Ovary (tissue), 10 donors: ENCODE measurements at regions of chr3 and their contacts with region 1.

Region 1: DNA sequence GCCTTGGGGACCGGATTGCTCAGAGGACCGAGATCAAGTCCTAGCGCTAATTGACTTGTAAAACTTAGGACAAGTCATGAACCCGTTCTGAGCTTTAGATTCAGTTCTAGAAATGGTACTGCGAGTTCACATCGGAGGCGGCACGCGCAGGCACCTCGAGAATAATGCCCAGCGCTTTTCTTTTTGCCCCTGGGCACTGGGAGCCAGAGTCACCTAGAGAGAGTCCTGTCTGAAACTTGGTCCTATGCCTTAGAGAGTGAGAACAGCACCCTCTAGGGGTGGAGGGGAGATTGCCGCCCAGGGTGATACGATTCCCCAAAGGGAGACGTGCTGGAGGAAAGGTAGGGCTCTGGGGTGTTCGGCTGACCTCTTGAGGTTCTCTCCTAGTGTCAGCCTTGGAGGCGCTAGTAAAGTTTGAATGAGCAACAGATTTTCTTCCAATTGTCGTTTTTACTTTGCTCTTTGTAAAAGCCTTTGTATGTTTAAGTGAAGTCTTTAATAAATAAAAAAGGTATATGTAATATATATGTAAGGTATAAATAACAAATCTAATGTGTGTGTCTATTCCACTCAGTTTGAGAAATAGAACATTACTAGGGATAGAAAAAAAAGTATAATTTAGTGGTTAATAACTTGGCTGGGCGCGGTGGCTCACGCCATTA is 826 bp downstream of the EEF1AKMT4 start:
- DNase-seq: peak; percentile 64 to 86 (median 79)
- H3K4me3 ChIP-seq: peak overlapping the region; percentile 97
- H3K27ac ChIP-seq: no peak overlapping the region
- H3K4me1 ChIP-seq: peaks cover 2% of the 10 kb centered on the region
- H3K27me3 ChIP-seq: no peaks in the 10 kb centered on the region
- CTCF ChIP-seq: peak; percentile 53 to 64 (median 57)
- EP300 ChIP-seq: no peak
- POLR2A ChIP-seq: no peak

Region 2: GRCh38 chr3:183895296-183895695 is 355.0 kb before region 1 on chr3:
- intact Hi-C with region 1: loop called in 3 of 4 experiments (anchors 5 to 10 kb)
- DNase-seq: peak in 1 of 5 donors; percentile 32
- H3K4me3 ChIP-seq: no peak overlapping the region
- H3K27ac ChIP-seq: no peak overlapping the region
- H3K4me1 ChIP-seq: no peaks in the 10 kb centered on the region
- H3K27me3 ChIP-seq: no peaks in the 10 kb centered on the region
- CTCF ChIP-seq: peak in 2 of 3 donors; percentile 33 to 35
- EP300 ChIP-seq: no peak
- POLR2A ChIP-seq: no peak

Region 3: GRCh38 chr3:184135149-184135910 is 115.0 kb before region 1 on chr3 and contains the start of gene EIF2B5:
- intact Hi-C with region 1: loop called in 2 of 4 experiments (anchors 10 kb)
- DNase-seq: peak; percentile 86 to 91 (median 87)
- H3K4me3 ChIP-seq: peak within 1 kb of the TSS; percentile 60
- H3K27ac ChIP-seq: peak within 1 kb of the TSS; percentile 80 to 88
- H3K4me1 ChIP-seq: no peaks in the 10 kb centered on the region
- H3K27me3 ChIP-seq: no peaks in the 10 kb centered on the region
- CTCF ChIP-seq: peak in 1 of 3 donors; percentile 33
- EP300 ChIP-seq: no peak
- POLR2A ChIP-seq: peak; percentile 52
- total RNA-seq, gene EIF2B5: 18.6 to 31.9 (median 28.7) TPM

Region 4: DNA sequence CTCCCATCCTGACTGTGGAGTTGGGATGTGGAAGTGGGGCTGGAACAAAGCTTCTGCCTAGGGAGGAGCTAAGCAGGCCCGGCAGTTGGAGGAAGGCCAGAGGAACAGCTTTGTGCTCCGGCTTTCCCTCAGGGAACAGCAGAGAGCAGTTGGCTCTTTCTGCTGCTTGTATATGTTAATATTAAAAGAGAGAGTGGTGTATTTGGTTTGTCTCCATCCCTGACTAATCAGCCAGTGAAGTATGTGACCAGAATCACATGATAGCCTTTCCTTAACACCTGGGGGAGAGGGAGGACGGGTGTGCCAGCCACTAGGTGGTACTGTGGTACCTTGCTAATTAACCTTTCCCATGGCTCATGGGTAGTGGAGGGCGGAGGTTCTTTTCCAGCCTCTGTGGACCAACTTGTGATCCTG is 105.2 kb before region 1 on chr3:
- intact Hi-C with region 1: loop called in 1 of 4 experiments (anchors 10 kb)
- DNase-seq: peak in 1 of 5 donors; percentile 38
- H3K4me3 ChIP-seq: no peak overlapping the region
- H3K27ac ChIP-seq: no peak overlapping the region
- H3K4me1 ChIP-seq: no peaks in the 10 kb centered on the region
- H3K27me3 ChIP-seq: no peaks in the 10 kb centered on the region
- CTCF ChIP-seq: no peak
- EP300 ChIP-seq: no peak
- POLR2A ChIP-seq: no peak

Region 5: GRCh38 chr3:184185461-184186308 is 64.6 kb before region 1 on chr3 and contains the start of gene ABCF3:
- intact Hi-C with region 1: loop called in 2 of 4 experiments (anchors 5 kb)
- DNase-seq: peak; percentile 99 to 100 (median 99)
- H3K4me3 ChIP-seq: peak within 1 kb of the TSS; percentile 85
- H3K27ac ChIP-seq: peak within 1 kb of the TSS; percentile 55 to 73
- H3K4me1 ChIP-seq: peaks cover 4% of the 10 kb centered on the region
- H3K27me3 ChIP-seq: no peaks in the 10 kb centered on the region
- CTCF ChIP-seq: no peak
- EP300 ChIP-seq: no peak
- POLR2A ChIP-seq: peak; percentile 68
- total RNA-seq, gene ABCF3: 56.6 to 82.0 (median 61.7) TPM